ENCODE measurements at regions of chr18 and their contacts with region 1.

Region 1: DNA sequence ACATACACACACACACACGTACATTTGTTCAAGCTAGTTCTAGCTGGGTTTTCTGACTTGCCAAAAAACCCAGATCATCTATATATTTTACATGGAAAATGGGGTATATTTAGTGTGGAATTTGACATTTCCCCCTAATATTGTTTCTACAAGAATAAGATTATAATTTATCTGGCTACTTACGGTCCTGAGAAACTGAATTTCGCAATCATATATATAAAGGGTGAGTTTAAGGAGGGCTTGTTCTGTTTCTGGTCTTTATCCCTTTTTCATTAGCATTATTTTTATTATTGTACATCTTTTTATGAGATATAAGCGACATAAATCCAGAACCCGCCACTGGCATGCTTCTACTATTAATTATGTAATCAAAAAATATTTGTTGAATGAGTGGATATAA is 528.9 kb downstream of the TMX3 start:
- DNase-seq: no peak
- H3K4me3 ChIP-seq: no peak overlapping the region
- CTCF ChIP-seq: no peak
- POLR2A ChIP-seq: no peak

Region 2: DNA sequence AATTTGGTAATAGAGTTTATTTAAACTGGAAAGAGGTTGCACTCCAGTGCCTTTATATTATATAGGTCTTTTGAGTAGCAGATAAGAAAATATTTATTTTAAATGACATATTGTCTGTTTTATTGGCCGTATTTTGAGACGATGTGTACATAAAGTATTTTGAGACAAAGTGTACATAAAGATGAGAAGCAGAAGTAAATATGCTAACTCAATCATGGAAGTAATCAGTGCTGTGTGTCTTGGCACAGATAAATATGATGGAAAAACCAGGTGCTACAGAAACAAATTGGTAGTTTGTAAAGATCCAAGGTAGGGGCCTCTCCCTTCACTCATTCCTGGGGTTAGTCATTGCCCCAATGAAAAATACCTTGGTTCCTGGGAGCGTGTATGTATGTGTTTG is 1052.4 kb before region 1 on chr18:
- intact Hi-C with region 1: no loop called
- DNase-seq: no peak
- H3K4me3 ChIP-seq: no peak overlapping the region
- CTCF ChIP-seq: no peak
- POLR2A ChIP-seq: no peak

Region 3: GRCh38 chr18:67862069-67862468 is 324.0 kb before region 1 on chr18:
- intact Hi-C with region 1: loop called (anchors 5 kb)
- DNase-seq: no peak
- H3K4me3 ChIP-seq: no peak overlapping the region
- CTCF ChIP-seq: no peak
- POLR2A ChIP-seq: no peak

Measured in lower leg skin (tissue), 4 donors.